ENCODE measurements at regions of chr1 and their contacts with region 1.

Region 1: GRCh38 chr1:160251687-160252526 is 10.4 kb downstream of the DCAF8 start:
- DNase-seq: peak; percentile 31
- ATAC-seq: peak; percentile 98
- H3K4me3 ChIP-seq: no peak overlapping the region
- H3K27ac ChIP-seq: no peak overlapping the region; the same call in 1 of the 2 replicates
- H3K4me1 ChIP-seq: no peaks in the 10 kb centered on the region
- H3K27me3 ChIP-seq: no peaks in the 10 kb centered on the region
- CTCF ChIP-seq: peak; percentile 73 to 88 (median 73); a peak in 5 of 6 replicates
- EP300 ChIP-seq: no peak
- POLR2A ChIP-seq: no peak
- RAD21 ChIP-seq: peak; percentile 90

Region 2: GRCh38 chr1:160085686-160086455 is 166.0 kb before region 1 on chr1:
- CTCF ChIA-PET with region 1: interaction called, 41 read pairs
- POLR2A ChIA-PET with region 1: interaction called, 3 read pairs
- RAD21 ChIA-PET with region 1: interaction called, 17 read pairs
- SMC1A ChIA-PET with region 1: interaction called, 19 read pairs
- in situ Hi-C with region 1: no loop called
- intact Hi-C with region 1: no loop called
- DNase-seq: no peak
- ATAC-seq: peak; percentile 87
- H3K4me3 ChIP-seq: no peak overlapping the region
- H3K27ac ChIP-seq: no peak overlapping the region
- H3K4me1 ChIP-seq: no peaks in the 10 kb centered on the region
- H3K27me3 ChIP-seq: peaks cover 0 to 2% of the 10 kb centered on the region in 2 experiments; a peak in 3 of 4 replicates
- CTCF ChIP-seq: peak; percentile 82 to 89 (median 88)
- EP300 ChIP-seq: no peak
- POLR2A ChIP-seq: no peak
- RAD21 ChIP-seq: peak; percentile 59

Region 3: GRCh38 chr1:160161965-160162705 is 89.8 kb before region 1 on chr1:
- CTCF ChIA-PET with region 1: interaction called, 26 read pairs
- POLR2A ChIA-PET with region 1: no interaction called
- RAD21 ChIA-PET with region 1: interaction called, 3 read pairs
- SMC1A ChIA-PET with region 1: interaction called, 13 read pairs
- in situ Hi-C with region 1: no loop called
- intact Hi-C with region 1: no loop called
- DNase-seq: no peak
- ATAC-seq: peak; percentile 92
- H3K4me3 ChIP-seq: no peak overlapping the region
- H3K27ac ChIP-seq: no peak overlapping the region
- H3K4me1 ChIP-seq: peaks cover 17% of the 10 kb centered on the region
- H3K27me3 ChIP-seq: no peaks in the 10 kb centered on the region; a peak in 1 of 4 replicates
- CTCF ChIP-seq: peak; percentile 51 to 63 (median 60); a peak in 5 of 6 replicates
- EP300 ChIP-seq: no peak
- POLR2A ChIP-seq: no peak
- RAD21 ChIP-seq: peak; percentile 72

Region 4: GRCh38 chr1:160205242-160206035 is 46.5 kb before region 1 on chr1 and contains the start of gene PEA15:
- CTCF ChIA-PET with region 1: interaction called, 89 read pairs
- POLR2A ChIA-PET with region 1: interaction called, 6 read pairs
- RAD21 ChIA-PET with region 1: interaction called, 89 read pairs
- SMC1A ChIA-PET with region 1: interaction called, 95 read pairs
- in situ Hi-C with region 1: no loop called
- intact Hi-C with region 1: no loop called
- DNase-seq: no peak
- ATAC-seq: peak; percentile 76
- H3K4me3 ChIP-seq: peak within 1 kb of the TSS; percentile 99
- H3K27ac ChIP-seq: peak within 1 kb of the TSS; percentile 96
- H3K4me1 ChIP-seq: peaks cover 26% of the 10 kb centered on the region
- H3K27me3 ChIP-seq: no peaks in the 10 kb centered on the region
- CTCF ChIP-seq: no peak
- EP300 ChIP-seq: no peak
- POLR2A ChIP-seq: peak; percentile 66; the same call in 1 of the 2 replicates
- RAD21 ChIP-seq: no peak
- polyA plus RNA-seq, gene PEA15: 15.1 to 28.2 TPM

Region 5: GRCh38 chr1:160232911-160233310 is 19.0 kb before region 1 on chr1:
- CTCF ChIA-PET with region 1: interaction called, 116 read pairs
- POLR2A ChIA-PET with region 1: interaction called, 3 read pairs
- RAD21 ChIA-PET with region 1: interaction called, 31 read pairs
- SMC1A ChIA-PET with region 1: interaction called, 18 read pairs
- in situ Hi-C with region 1: no loop called
- intact Hi-C with region 1: no loop called
- DNase-seq: no peak
- ATAC-seq: no peak
- H3K4me3 ChIP-seq: no peak overlapping the region
- H3K27ac ChIP-seq: no peak overlapping the region
- H3K4me1 ChIP-seq: peaks cover 4% of the 10 kb centered on the region; the same call in 1 of the 2 replicates
- H3K27me3 ChIP-seq: no peaks in the 10 kb centered on the region
- CTCF ChIP-seq: no peak
- EP300 ChIP-seq: no peak
- POLR2A ChIP-seq: no peak
- RAD21 ChIP-seq: no peak

Region 6: GRCh38 chr1:160284782-160285344 is 33.0 kb after region 1 on chr1 and contains the start of gene PEX19:
- CTCF ChIA-PET with region 1: interaction called, 141 read pairs
- POLR2A ChIA-PET with region 1: interaction called, 3 read pairs
- RAD21 ChIA-PET with region 1: interaction called, 49 read pairs
- SMC1A ChIA-PET with region 1: interaction called, 19 read pairs
- in situ Hi-C with region 1: no loop called
- intact Hi-C with region 1: loop called (anchors 5 kb)
- DNase-seq: peak; percentile 71
- ATAC-seq: peak; percentile 100
- H3K4me3 ChIP-seq: peak within 1 kb of the TSS; percentile 91
- H3K27ac ChIP-seq: peak within 1 kb of the TSS; percentile 68
- H3K4me1 ChIP-seq: no peaks in the 10 kb centered on the region
- H3K27me3 ChIP-seq: no peaks in the 10 kb centered on the region
- CTCF ChIP-seq: no peak
- EP300 ChIP-seq: no peak
- POLR2A ChIP-seq: peak; percentile 90
- RAD21 ChIP-seq: no peak
- polyA plus RNA-seq, gene PEX19: 29.4 to 50.8 TPM

Region 7: DNA sequence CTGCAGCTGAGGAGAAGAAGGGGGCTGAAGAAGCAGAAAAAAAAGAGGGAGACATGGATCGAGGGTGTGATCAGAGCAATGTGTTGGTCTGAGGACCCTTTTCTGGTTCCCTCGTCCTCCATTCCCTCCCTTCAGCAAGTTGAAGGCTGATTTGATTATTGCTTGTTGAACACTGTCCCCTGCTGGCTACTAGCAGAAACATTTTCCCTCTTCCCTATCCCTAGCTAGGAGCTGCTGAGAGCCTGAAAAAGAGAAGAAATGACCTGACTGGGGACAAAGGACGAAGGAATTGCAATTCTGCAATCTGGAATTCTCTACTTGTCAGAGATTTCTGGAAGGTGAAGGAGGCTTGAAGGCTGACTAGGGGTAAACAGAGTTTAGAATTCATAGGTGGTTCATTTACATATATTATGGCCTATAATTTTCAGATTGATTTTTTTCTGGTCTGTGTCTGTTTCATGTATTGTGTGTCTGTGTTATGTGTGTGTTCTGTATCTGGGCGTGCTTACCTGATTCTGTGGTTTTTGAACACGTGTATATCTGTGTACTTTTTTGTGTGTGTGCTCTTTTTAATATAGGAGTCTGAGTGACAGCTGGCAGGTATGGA is 124.7 kb after region 1 on chr1:
- CTCF ChIA-PET with region 1: interaction called, 29 read pairs
- POLR2A ChIA-PET with region 1: no interaction called
- RAD21 ChIA-PET with region 1: interaction called, 22 read pairs
- SMC1A ChIA-PET with region 1: interaction called, 5 read pairs
- in situ Hi-C with region 1: no loop called
- intact Hi-C with region 1: no loop called
- DNase-seq: peak; percentile 36
- ATAC-seq: peak; percentile 92
- H3K4me3 ChIP-seq: no peak overlapping the region
- H3K27ac ChIP-seq: no peak overlapping the region
- H3K4me1 ChIP-seq: peaks cover 15% of the 10 kb centered on the region
- H3K27me3 ChIP-seq: no peaks in the 10 kb centered on the region
- CTCF ChIP-seq: peak; percentile 96 to 99 (median 99); a peak in 5 of 6 replicates
- EP300 ChIP-seq: no peak
- POLR2A ChIP-seq: no peak
- RAD21 ChIP-seq: peak; percentile 95

Region 8: GRCh38 chr1:160407839-160408801 is 156.2 kb after region 1 on chr1:
- CTCF ChIA-PET with region 1: no interaction called
- POLR2A ChIA-PET with region 1: no interaction called
- RAD21 ChIA-PET with region 1: no interaction called
- SMC1A ChIA-PET with region 1: no interaction called
- in situ Hi-C with region 1: no loop called
- intact Hi-C with region 1: no loop called
- DNase-seq: no peak
- ATAC-seq: no peak
- H3K4me3 ChIP-seq: no peak overlapping the region
- H3K27ac ChIP-seq: no peak overlapping the region
- H3K4me1 ChIP-seq: no peaks in the 10 kb centered on the region
- H3K27me3 ChIP-seq: no peaks in the 10 kb centered on the region; a peak in 1 of 4 replicates
- CTCF ChIP-seq: no peak
- EP300 ChIP-seq: no peak
- POLR2A ChIP-seq: no peak
- RAD21 ChIP-seq: no peak

Region 9: GRCh38 chr1:160466961-160467360 is 215.1 kb after region 1 on chr1:
- CTCF ChIA-PET with region 1: no interaction called
- POLR2A ChIA-PET with region 1: no interaction called
- RAD21 ChIA-PET with region 1: no interaction called
- SMC1A ChIA-PET with region 1: no interaction called
- in situ Hi-C with region 1: no loop called
- intact Hi-C with region 1: no loop called
- DNase-seq: no peak
- ATAC-seq: peak; percentile 73
- H3K4me3 ChIP-seq: no peak overlapping the region
- H3K27ac ChIP-seq: no peak overlapping the region; the same call in 1 of the 2 replicates
- H3K4me1 ChIP-seq: peaks cover 41% of the 10 kb centered on the region
- H3K27me3 ChIP-seq: no peaks in the 10 kb centered on the region
- CTCF ChIP-seq: no peak
- EP300 ChIP-seq: no peak
- POLR2A ChIP-seq: no peak
- RAD21 ChIP-seq: no peak

Region 10: DNA sequence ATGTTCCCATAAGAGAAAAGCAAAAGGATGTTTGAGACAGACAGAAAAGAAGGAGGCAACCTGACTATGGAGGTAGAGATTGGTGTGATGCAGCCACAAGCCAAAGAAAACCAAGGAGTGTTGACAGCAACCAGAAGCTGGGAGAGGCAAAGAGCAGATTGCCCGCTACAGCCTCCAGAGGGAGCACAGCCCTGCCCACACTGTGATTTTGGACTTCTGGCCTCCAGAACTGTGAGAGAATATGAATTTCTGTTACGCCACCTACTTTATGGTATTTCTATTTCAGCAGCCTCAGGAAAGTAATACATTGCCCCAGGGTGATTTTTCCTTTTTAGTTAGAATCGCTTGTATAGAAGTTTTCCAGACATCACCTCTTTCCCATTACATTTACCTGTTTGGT is 242.7 kb after region 1 on chr1:
- CTCF ChIA-PET with region 1: no interaction called
- POLR2A ChIA-PET with region 1: no interaction called
- RAD21 ChIA-PET with region 1: no interaction called
- SMC1A ChIA-PET with region 1: no interaction called
- in situ Hi-C with region 1: no loop called
- intact Hi-C with region 1: no loop called
- DNase-seq: no peak
- ATAC-seq: no peak
- H3K4me3 ChIP-seq: no peak overlapping the region
- H3K27ac ChIP-seq: no peak overlapping the region
- H3K4me1 ChIP-seq: peaks cover 3% of the 10 kb centered on the region
- H3K27me3 ChIP-seq: no peaks in the 10 kb centered on the region
- CTCF ChIP-seq: 0 out of 6 replicates have a peak, but pooled peaks of 2 of the 3 experiments have one; percentile 13 to 14
- EP300 ChIP-seq: no peak
- POLR2A ChIP-seq: no peak
- RAD21 ChIP-seq: no peak

Region 11: DNA sequence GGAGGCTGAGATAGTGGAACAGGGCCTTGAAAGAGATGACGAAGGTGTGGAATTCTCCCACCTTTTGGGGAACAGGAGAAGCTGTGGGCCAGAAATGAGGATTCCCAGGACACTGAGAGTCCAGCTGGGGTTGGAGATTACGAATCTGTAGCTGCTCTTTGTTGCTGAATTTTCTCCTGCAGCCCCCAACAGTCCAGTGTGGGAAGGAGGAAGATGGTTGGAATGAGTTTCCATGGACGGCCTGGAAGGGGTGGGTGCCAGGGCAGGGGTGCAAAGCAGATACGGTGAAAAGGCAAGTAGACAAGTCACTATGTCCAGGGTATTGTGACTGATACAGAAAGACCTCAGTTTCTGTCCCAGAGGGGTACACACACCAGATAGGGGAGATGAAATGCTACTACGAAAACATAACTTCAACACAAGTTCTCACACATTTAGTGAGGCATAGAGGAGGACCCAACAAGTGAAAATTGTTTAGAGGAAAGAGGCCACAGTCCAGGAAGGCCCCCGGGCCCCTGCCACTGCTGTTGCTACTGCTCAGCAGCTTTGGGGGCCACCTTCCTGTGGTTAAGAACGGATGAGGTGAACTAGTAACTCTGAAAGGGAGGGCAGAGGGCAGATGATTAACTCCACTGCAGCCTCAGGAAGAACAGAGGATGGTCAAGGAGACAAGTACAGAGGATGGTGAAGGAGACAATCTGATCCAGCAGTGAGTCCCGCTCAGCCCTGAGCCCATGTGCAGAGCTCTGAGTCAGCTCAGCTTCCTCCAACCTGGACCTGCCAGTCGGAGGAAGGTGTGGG is 603.5 kb after region 1 on chr1:
- CTCF ChIA-PET with region 1: no interaction called
- POLR2A ChIA-PET with region 1: no interaction called
- RAD21 ChIA-PET with region 1: no interaction called
- SMC1A ChIA-PET with region 1: no interaction called
- in situ Hi-C with region 1: no loop called
- intact Hi-C with region 1: no loop called
- DNase-seq: peak; percentile 51
- ATAC-seq: peak; percentile 85
- H3K4me3 ChIP-seq: no peak overlapping the region
- H3K27ac ChIP-seq: no peak overlapping the region
- H3K4me1 ChIP-seq: peaks cover 14% of the 10 kb centered on the region
- H3K27me3 ChIP-seq: no peaks in the 10 kb centered on the region
- CTCF ChIP-seq: no peak
- EP300 ChIP-seq: no peak
- POLR2A ChIP-seq: no peak
- RAD21 ChIP-seq: no peak

Measured in GM12878 (cell line).